ENCODE measurements at regions of chr9 and their contacts with region 1.

Region 1: DNA sequence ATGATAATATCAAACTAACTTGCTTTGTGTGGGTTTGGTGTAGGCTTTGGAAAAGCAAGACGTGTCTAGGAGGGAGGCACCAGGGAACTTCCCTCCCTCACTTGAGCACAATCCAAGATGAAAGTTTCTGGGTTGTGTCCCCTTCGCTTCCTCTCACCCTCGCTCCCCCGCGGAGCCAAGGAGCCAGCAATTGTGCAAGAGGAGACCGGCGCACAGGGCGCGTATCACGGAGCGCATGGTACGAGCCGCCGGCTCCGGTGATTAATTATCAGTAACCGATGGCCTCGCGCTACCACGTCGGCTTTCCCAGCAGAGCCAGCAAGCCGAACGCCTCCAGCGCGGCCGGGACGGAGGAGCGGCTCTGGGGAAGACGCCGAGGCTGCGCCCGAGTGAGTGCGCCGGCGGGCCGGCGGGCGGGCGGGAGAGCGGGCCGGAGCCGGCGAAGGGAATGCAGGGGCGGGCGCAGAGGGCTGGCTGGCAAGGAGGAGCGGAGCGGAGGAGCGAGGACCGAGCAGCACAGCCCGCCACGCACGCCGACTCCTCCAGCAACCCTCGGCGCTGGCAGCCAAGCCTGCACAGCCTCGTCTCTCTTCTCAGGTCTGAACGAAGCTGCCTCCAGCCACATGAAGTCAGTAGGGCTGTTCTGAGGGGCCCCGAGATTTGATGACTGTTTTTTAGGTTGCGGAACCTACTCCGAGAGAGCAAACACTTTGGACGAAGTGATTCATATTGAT is 143.6 kb downstream of the BNC2 start:
- DNase-seq: peak; percentile 69
- H3K4me3 ChIP-seq: peak overlapping the region; percentile 40 to 43
- H3K27ac ChIP-seq: peak overlapping the region; percentile 80 to 88
- H3K4me1 ChIP-seq: no peaks in the 10 kb centered on the region
- H3K27me3 ChIP-seq: no peaks in the 10 kb centered on the region
- CTCF ChIP-seq: no peak
- POLR2A ChIP-seq: no peak

Region 2: DNA sequence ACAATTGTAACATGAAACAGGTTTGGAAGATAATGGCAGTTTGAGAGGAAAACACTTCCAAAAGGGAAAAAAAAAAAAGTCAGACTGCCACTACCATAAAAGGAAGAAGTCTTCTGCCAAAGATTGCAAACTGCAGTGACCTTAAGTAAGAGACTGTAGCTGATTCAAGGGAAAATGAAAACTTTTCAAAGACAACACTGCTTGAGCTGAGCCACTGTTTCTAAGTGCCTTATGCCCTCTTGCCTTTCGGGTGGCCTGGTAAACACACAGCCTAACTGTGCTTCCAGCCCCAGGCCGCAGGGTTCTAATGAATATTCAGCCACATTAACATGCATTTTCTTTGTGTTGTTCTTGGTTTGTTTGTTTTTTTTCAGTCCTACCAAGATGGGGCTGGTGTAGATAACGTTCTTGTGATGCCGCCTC is 211.0 kb before region 1 on chr9:
- intact Hi-C with region 1: loop called (anchors 10 kb)
- DNase-seq: no peak
- H3K4me3 ChIP-seq: no peak overlapping the region
- H3K27ac ChIP-seq: no peak overlapping the region
- H3K4me1 ChIP-seq: no peaks in the 10 kb centered on the region
- H3K27me3 ChIP-seq: no peaks in the 10 kb centered on the region
- CTCF ChIP-seq: no peak
- POLR2A ChIP-seq: no peak

Region 3: GRCh38 chr9:16679327-16679821 is 47.5 kb before region 1 on chr9:
- intact Hi-C with region 1: no loop called
- DNase-seq: no peak
- H3K4me3 ChIP-seq: no peak overlapping the region
- H3K27ac ChIP-seq: no peak overlapping the region
- H3K4me1 ChIP-seq: no peaks in the 10 kb centered on the region
- H3K27me3 ChIP-seq: no peaks in the 10 kb centered on the region
- CTCF ChIP-seq: no peak
- POLR2A ChIP-seq: no peak

Measured in prostate gland (tissue), 2 donors.